Activated naive CD4-positive, alpha-beta T cell treated with anti-CD3 and anti-CD28 coated beads for 36 hours (primary cell): ENCODE measurements at regions of chr21 and their contacts with region 1.

Region 1: DNA sequence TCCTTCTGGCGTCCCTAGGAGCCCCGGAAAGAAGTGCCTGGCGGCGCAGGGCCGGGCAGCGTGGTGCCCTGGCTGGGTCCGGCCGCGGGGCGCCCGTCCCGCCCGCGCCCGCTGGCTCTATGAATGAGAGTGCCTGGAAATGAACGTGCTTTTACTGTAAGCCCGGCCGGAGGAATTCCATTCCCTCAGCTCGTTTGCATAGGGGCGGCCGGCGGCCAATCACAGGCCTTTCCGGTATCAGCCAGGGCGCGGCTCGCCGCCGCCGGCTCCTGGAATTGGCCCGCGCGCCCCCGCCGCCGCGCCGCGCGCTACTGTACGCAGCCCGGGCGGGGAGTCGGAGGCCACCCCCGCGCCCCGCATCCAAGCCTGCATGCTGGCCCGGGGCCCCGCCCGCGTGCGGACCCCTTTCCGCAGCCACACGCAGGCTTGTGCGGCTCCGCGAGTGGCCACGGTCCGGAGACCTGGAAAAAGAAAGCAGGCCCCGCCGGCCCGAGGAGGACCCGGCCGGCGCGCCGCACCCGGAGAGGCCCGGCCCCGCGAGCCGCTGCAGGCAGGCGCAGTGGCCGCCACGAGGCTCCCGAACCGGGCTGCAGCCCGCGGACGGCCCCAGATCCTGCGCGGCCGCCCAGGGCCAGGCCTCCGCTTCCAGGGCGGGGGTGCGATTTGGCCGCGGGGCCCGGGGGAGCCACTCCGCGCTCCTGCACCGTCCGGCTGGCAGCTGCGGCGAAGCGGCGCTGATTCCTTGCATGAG is 160.4 kb downstream of the RUNX1 start:
- DNase-seq: peak; percentile 90
- H3K4me3 Mint-ChIP-seq: peak overlapping the region; percentile 91
- H3K27ac Mint-ChIP-seq: peak overlapping the region; percentile 99
- H3K4me1 Mint-ChIP-seq: peaks cover 30% of the 10 kb centered on the region
- H3K27me3 Mint-ChIP-seq: no peaks in the 10 kb centered on the region

Region 2: DNA sequence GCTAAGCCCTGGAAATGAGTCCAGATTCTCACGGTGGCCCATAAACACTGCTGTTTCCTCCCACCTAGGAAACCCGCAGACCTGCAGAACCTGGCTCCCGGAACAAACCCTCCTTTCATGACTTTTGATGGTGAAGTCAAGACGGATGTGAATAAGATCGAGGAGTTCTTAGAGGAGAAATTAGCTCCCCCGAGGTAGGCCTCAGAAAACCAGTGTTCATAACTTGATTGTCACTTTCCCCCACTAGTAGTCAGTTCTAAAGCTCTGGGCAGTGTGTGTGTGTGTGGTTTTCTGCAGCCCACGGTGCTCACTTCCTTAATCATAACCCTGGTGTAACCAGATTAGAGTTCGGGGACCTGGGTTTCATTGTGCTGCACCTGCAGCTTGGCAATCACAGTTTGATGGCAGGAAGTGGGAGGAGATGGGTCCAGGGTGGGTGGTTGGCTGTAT is 180.8 kb before region 1 on chr21:
- CTCF ChIA-PET with region 1: interaction called, 4 read pairs
- intact Hi-C with region 1: loop called (anchors 5 kb)
- DNase-seq: peak; percentile 83
- H3K4me3 Mint-ChIP-seq: no peak overlapping the region
- H3K27ac Mint-ChIP-seq: peak overlapping the region; percentile 73
- H3K4me1 Mint-ChIP-seq: peaks cover 28% of the 10 kb centered on the region
- H3K27me3 Mint-ChIP-seq: peaks cover 4% of the 10 kb centered on the region

Region 3: GRCh38 chr21:34933609-34934335 is 45.0 kb after region 1 on chr21:
- CTCF ChIA-PET with region 1: interaction called, 24 read pairs
- intact Hi-C with region 1: loop called (anchors 1 kb)
- DNase-seq: peak; percentile 51
- H3K4me3 Mint-ChIP-seq: peak overlapping the region; percentile 77
- H3K27ac Mint-ChIP-seq: peak overlapping the region; percentile 97
- H3K4me1 Mint-ChIP-seq: peaks cover 80% of the 10 kb centered on the region
- H3K27me3 Mint-ChIP-seq: no peaks in the 10 kb centered on the region

Region 4: GRCh38 chr21:34986561-34987500 is 98.1 kb after region 1 on chr21:
- CTCF ChIA-PET with region 1: interaction called, 11 read pairs
- intact Hi-C with region 1: loop called (anchors 1 kb)
- DNase-seq: peak; percentile 92
- H3K4me3 Mint-ChIP-seq: peak overlapping the region; percentile 71
- H3K27ac Mint-ChIP-seq: peak overlapping the region; percentile 89
- H3K4me1 Mint-ChIP-seq: peaks cover 94% of the 10 kb centered on the region
- H3K27me3 Mint-ChIP-seq: no peaks in the 10 kb centered on the region

Region 5: DNA sequence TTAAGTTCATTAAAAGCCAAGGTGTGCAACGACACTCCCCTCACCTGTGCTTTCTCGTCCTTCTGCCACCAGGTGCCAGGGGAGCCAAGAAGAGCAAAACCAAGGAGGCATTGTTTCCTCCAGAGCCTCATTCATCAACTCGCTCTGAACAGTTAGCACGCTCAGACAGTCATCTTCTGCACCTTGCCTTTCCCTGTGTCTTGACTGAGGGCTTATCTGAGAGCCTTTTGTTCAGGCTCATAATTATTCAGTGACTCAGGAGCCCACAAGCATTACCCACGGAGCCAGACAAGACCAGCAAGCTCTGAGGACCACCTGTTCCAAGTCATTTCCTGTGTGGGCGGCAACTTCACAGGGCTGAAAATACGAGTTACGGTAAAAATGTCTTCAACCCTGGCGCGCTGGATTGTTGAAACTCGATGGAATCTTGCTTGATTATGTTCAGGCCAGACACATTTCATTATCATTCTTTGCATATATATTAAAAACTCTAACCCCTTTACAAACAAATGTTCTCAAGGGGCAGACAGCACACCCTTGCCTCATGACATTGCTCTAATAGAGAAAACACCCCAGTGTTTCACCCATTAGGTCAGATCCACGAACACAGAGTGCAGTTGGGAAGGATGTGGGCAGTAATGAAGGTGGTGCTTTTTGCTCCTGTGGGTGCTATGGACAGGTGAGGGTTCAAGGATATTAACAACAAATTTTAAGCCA is 250.1 kb after region 1 on chr21:
- CTCF ChIA-PET with region 1: no interaction called
- intact Hi-C with region 1: loop called (anchors 2 kb)
- DNase-seq: peak; percentile 87
- H3K4me3 Mint-ChIP-seq: peak overlapping the region; percentile 70
- H3K27ac Mint-ChIP-seq: peak overlapping the region; percentile 95
- H3K4me1 Mint-ChIP-seq: peaks cover 38% of the 10 kb centered on the region
- H3K27me3 Mint-ChIP-seq: no peaks in the 10 kb centered on the region

Region 6: DNA sequence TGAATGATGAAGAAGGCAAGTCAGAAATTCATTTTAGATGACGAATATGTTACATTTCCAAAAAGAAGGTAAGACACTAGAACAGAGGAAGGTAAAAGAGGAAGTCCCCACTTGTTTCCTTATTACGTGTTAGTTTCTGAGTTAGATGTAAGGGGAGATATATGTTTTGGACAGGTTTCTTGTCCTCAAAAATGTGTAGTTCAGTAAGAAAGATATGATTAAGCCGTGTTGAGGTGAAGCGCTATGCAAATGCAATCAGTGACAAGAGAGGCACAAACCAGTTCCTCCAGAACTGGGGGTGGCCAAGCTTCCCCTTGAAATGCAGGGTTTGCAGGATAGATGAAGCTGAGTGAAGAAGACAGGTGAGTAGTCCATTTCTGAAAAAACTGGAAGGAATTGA is 453.7 kb after region 1 on chr21:
- CTCF ChIA-PET with region 1: no interaction called
- intact Hi-C with region 1: loop called (anchors 2 kb)
- DNase-seq: peak; percentile 68
- H3K4me3 Mint-ChIP-seq: peak overlapping the region; percentile 39
- H3K27ac Mint-ChIP-seq: peak overlapping the region; percentile 93
- H3K4me1 Mint-ChIP-seq: peaks cover 42% of the 10 kb centered on the region
- H3K27me3 Mint-ChIP-seq: peaks cover 4% of the 10 kb centered on the region

Region 7: GRCh38 chr21:35840197-35840799 is 951.6 kb after region 1 on chr21:
- CTCF ChIA-PET with region 1: no interaction called
- intact Hi-C with region 1: loop called (anchors 2 kb)
- DNase-seq: peak; percentile 74
- H3K4me3 Mint-ChIP-seq: no peak overlapping the region
- H3K27ac Mint-ChIP-seq: no peak overlapping the region
- H3K4me1 Mint-ChIP-seq: peaks cover 3% of the 10 kb centered on the region
- H3K27me3 Mint-ChIP-seq: no peaks in the 10 kb centered on the region